Pancreas (tissue), 10 donors: ENCODE measurements at regions of chr7 and their contacts with region 1.

Region 1: GRCh38 chr7:33109005-33109757 is at the start of gene RP9:
- DNase-seq: peak; percentile 46 to 87 (median 72)
- ATAC-seq: peak; percentile 94 to 96 (median 95)
- H3K4me3 ChIP-seq: peak within 1 kb of the TSS; percentile 78 to 97 (median 91)
- H3K27ac ChIP-seq: peak within 1 kb of the TSS; percentile 35 to 72 (median 71)
- H3K4me1 ChIP-seq: peaks cover 13 to 23% (median 16%) of the 10 kb centered on the region in 3 donors
- H3K27me3 ChIP-seq: no peaks in the 10 kb centered on the region
- CTCF ChIP-seq: peak; percentile 36 to 58 (median 46)
- total RNA-seq, gene RP9: 5.5 to 10.3 (median 7.1) TPM

Region 2: DNA sequence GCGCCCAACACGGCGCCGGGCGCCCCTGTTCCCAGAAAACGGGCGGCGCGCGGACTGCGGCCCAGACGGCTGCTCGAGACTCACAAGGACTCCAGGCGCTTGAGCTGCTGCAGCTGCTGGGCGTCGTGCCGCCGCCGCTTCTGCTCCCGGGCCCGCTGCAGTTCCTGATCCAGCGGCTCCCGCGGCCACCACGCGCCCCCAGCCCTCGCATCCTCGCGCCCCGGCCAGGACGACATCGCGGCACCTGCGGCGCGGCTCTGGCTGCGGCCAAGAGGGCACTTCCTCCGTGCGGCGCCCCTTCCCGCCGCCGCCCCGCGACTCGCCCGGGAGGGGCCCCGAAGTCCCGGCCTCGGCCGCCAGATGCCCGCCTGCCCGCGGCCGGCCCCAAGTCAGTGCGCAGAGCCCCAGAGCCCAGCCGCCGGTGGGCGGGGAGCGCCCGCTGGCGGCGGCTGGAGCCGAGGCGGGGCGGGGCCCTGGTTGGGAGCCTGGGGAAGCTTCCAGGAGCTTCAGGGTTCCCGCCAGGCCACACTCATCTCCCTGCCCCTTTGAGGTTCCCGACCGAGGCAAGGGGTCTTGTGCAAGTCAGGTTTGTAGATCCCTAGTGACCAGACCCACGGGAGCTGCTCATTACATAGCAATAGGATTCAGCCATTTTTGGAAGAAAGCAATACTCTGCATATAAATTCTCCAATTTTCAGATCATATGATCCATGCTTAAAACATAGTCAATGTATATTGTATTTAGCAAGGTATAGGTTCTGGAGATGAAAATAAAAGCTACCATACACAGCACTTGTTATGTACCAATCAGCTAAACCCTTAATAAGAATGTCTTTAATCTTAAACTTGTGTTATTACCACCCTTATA is 166.2 kb before region 1 on chr7:
- intact Hi-C with region 1: loop called in 1 of 3 experiments (anchors 5 kb)
- DNase-seq: peak; percentile 74 to 94 (median 84)
- ATAC-seq: peak; percentile 95 to 98 (median 96)
- H3K4me3 ChIP-seq: peak overlapping the region; percentile 76 to 88 (median 87)
- H3K27ac ChIP-seq: peak overlapping the region; percentile 81 to 96 (median 92)
- H3K4me1 ChIP-seq: peaks cover 0 to 5% (median 0%) of the 10 kb centered on the region in 3 donors
- H3K27me3 ChIP-seq: no peaks in the 10 kb centered on the region
- CTCF ChIP-seq: peak in 3 of 4 donors; percentile 22 to 42 (median 27)

Region 3: DNA sequence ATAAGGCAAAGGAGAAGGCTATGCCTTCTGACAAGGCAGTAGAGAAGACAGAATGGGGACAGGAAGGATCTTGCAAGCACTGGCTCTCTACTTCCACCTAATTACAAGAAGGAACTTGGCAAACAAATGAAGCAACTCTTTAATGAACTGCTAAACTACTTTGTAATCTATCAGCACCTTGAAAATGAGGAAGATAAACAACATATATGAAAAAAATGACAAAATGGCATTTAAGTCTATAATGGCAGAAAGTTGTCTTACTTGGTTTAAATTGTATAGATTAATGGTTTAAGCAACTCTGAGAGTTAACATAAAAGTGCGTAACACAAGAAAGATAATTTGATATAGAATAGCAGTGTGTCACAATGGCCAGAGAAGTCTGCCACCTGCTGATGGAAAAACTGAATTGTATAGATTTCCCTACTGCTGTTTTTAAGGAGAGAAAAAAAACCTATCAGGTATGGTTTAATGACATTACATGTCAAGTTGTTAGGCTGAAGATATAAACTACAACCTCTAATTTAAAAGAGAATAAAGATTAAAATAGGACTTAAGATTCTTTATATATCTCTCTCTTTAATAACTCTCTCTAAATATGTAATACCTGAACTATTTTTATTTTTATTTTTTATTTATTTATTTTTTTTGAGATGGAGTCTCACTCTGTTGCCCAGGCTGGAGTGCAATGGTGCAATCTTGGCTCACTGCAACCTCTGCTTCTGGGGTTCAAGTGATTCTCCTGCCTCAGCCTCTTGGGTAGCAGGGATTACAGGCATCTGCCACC is 58.5 kb before region 1 on chr7:
- intact Hi-C with region 1: loop called in 1 of 3 experiments (anchors 10 kb)
- DNase-seq: no peak
- ATAC-seq: peak; percentile 67 to 92 (median 89)
- H3K4me3 ChIP-seq: peak overlapping the region in 1 of 4 donors; percentile 11
- H3K27ac ChIP-seq: peak overlapping the region in 2 of 4 donors; percentile 64 to 77
- H3K4me1 ChIP-seq: peaks cover 3 to 35% (median 12%) of the 10 kb centered on the region in 3 donors
- H3K27me3 ChIP-seq: no peaks in the 10 kb centered on the region
- CTCF ChIP-seq: peak in 3 of 4 donors; percentile 25 to 34 (median 28)